ENCODE measurements at regions of chr6 and their contacts with region 1.

Region 1: GRCh38 chr6:112337209-112337638 is 9.9 kb upstream of the RFPL4B start:
- DNase-seq: peak; percentile 54 to 96 (median 69)

Region 2: DNA sequence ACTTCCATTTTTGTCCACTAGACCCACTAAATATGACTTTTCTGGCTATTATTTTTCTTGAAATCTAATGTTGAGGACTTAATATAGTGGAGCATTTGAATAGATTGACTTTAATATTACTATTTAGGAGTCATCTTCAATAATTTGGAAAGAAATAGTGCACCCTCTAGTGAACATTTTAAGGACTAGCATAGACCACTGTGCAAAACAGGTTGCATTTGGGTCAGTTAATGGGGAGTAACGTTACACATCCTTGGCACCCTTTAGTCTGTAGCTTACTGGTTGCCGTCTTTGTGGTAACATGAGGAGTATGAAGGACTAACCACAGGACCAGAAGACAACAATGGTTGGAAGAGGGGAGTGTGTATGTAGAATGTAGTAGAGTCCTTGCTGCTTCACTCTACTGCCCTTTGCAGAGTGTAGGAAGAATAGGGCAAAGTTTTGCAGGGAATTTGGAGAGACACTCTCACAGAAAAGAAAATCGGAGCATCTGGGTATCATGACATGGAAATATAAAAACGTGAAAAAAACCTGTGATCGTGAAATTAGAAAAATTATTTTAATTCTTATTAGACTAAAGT is 35.1 kb after region 1 on chr6:
- intact Hi-C with region 1: loop called (anchors 1 kb)
- DNase-seq: no peak

Region 3: GRCh38 chr6:112563368-112563767 is 226.1 kb after region 1 on chr6:
- intact Hi-C with region 1: loop called (anchors 10 kb)
- DNase-seq: no peak